Right cardiac atrium (tissue), 5 donors: ENCODE measurements at regions of chr3 and their contacts with region 1.

Region 1: DNA sequence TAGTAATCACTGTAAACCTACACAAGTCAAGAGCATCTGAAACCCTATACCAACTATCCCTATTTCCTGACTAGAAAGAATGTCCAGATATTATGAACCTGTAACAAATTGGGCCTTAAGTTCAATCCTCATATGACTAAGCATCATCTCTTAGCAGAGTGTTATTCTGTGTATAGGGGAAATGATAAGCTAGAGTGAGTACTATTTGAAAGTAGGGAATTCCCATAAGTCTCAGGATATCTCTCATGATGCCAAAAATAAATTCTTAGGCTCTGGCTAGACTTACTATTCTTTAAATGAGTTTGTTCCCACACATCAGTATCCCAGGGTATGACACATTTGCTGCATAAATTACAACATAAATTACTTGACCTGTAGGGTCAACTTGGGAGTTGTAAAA is 15.3 kb downstream of the MRPL47 start:
- DNase-seq: no peak
- ATAC-seq: no peak
- H3K4me3 ChIP-seq: no peak overlapping the region
- H3K27ac ChIP-seq: no peak overlapping the region
- H3K4me1 ChIP-seq: no peaks in the 10 kb centered on the region
- H3K27me3 ChIP-seq: no peaks in the 10 kb centered on the region

Region 2: GRCh38 chr3:179369621-179370020 is 219.5 kb before region 1 on chr3:
- intact Hi-C with region 1: loop called in 1 of 4 experiments (anchors 10 kb)
- DNase-seq: no peak
- ATAC-seq: no peak
- H3K4me3 ChIP-seq: no peak overlapping the region
- H3K27ac ChIP-seq: no peak overlapping the region
- H3K4me1 ChIP-seq: no peaks in the 10 kb centered on the region
- H3K27me3 ChIP-seq: no peaks in the 10 kb centered on the region

Region 3: DNA sequence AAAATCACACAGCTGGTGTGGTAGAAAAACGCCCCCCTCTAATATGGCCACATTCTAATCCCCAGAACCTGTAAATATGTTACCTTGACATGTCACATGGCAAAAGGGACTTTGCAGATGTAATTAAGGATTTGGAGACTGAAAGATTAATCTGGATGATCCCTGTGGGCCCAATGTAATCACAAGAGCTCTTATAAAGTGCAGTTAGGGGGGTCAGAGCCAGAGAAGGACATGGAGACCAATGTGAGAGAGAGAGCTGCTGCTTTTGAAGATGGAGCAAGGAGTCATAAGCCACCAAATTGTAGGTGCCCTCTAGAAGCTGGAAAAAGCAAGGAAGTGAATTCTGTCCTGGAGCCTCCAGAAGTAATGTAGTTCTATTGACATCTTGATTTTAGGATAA is 295.0 kb after region 1 on chr3:
- intact Hi-C with region 1: no loop called
- DNase-seq: no peak
- ATAC-seq: no peak
- H3K4me3 ChIP-seq: no peak overlapping the region
- H3K27ac ChIP-seq: no peak overlapping the region
- H3K4me1 ChIP-seq: no peaks in the 10 kb centered on the region
- H3K27me3 ChIP-seq: no peaks in the 10 kb centered on the region

Region 4: DNA sequence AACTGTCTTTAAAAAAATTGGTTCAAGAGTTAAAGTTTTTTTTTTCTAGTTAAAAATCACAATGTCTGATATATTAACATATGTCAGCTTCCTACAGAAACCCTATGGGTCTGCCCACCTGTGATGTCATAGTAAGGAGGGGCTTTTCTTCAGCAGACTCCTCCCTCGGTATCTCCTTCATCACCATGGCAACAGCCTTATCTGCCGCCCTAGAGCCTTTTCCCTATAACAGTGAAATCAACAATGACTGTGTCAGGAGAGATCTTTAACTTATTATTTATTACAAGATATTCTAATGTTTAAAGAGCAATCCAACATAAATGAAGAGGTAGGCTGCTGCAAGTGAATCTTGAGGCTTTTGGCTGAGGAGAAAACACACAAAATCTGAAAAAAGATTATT is 308.9 kb after region 1 on chr3:
- intact Hi-C with region 1: no loop called
- DNase-seq: no peak
- ATAC-seq: no peak
- H3K4me3 ChIP-seq: no peak overlapping the region
- H3K27ac ChIP-seq: no peak overlapping the region
- H3K4me1 ChIP-seq: no peaks in the 10 kb centered on the region
- H3K27me3 ChIP-seq: no peaks in the 10 kb centered on the region